ENCODE measurements at regions of chr7 and their contacts with region 1.

Region 1: DNA sequence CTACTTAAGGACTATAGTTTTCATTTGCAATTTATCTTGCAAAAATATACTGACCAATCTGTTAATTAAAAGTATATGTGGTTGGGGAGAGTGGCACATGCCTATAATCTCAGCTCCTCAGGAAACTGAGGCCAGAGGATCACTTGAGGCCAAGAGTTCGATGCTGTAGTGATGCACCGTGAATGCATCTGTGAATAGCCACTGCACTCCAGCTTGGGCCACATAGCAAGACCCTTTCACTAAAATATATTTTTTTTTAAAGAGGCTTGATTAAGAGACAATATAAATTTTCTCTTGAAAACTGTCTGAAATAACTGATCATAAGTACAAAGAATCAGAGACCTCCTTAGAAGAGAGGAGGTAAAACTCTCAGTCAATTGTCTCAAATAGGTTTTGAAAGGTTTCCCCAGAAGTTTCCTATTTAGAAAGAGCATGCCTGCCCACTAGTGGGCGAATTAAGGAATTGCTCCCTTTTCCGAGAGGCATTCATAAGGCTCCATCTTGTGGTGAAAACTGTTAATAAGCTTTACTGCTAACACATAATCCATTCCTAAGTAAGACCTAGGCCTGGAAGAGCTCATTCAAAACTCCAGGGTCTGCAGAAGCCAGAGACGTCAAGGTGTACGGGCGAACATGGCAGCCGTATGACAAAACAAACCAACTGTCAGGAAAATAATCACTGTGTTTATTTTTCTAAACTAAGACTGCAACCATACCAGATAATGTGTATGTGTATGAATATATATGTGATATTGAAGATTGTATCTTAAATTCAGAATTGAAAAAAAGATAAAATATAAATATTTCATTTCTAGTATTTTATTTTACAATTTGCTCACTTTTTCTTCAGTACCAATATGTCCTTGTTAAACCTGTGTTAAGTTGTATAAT is 6.8 kb upstream of the TAS2R40 start:
- DNase-seq: peak; percentile 67 to 79 (median 77)
- H3K4me3 ChIP-seq: no peak overlapping the region
- H3K4me3 Mint-ChIP-seq: no peak overlapping the region
- H3K27ac ChIP-seq: no peak overlapping the region
- H3K27ac Mint-ChIP-seq: no peak overlapping the region
- H3K4me1 ChIP-seq: no peaks in the 10 kb centered on the region
- H3K4me1 Mint-ChIP-seq: peaks cover 0 to 1% (median 0%) of the 10 kb centered on the region in 4 donors
- H3K27me3 ChIP-seq: no peaks in the 10 kb centered on the region
- H3K27me3 Mint-ChIP-seq: peaks cover 3% of the 10 kb centered on the region in 2 donors

Region 2: GRCh38 chr7:142301923-142302550 is 913.0 kb before region 1 on chr7:
- CTCF ChIA-PET with region 1: interaction called, 23 read pairs
- POLR2A ChIA-PET with region 1: no interaction called
- intact Hi-C with region 1: loop called (anchors 2 kb)
- DNase-seq: no peak
- H3K4me3 ChIP-seq: no peak overlapping the region
- H3K4me3 Mint-ChIP-seq: no peak overlapping the region
- H3K27ac ChIP-seq: no peak overlapping the region
- H3K27ac Mint-ChIP-seq: no peak overlapping the region
- H3K4me1 ChIP-seq: peaks cover 8% of the 10 kb centered on the region
- H3K4me1 Mint-ChIP-seq: peaks cover 14 to 28% (median 18%) of the 10 kb centered on the region in 4 donors
- H3K27me3 ChIP-seq: no peaks in the 10 kb centered on the region
- H3K27me3 Mint-ChIP-seq: peaks cover 15 to 18% of the 10 kb centered on the region in 2 donors

Region 3: GRCh38 chr7:142535123-142535779 is 679.8 kb before region 1 on chr7:
- CTCF ChIA-PET with region 1: interaction called, 5 read pairs
- POLR2A ChIA-PET with region 1: no interaction called
- intact Hi-C with region 1: loop called (anchors 1 kb)
- DNase-seq: peak; percentile 57 to 80 (median 64)
- H3K4me3 ChIP-seq: peak overlapping the region in 1 of 2 donors; percentile 38
- H3K4me3 Mint-ChIP-seq: peak overlapping the region; percentile 61 to 86 (median 76)
- H3K27ac ChIP-seq: peak overlapping the region; percentile 49
- H3K27ac Mint-ChIP-seq: peak overlapping the region; percentile 32 to 94 (median 87)
- H3K4me1 ChIP-seq: peaks cover 28% of the 10 kb centered on the region
- H3K4me1 Mint-ChIP-seq: peaks cover 17 to 40% (median 23%) of the 10 kb centered on the region in 4 donors
- H3K27me3 ChIP-seq: no peaks in the 10 kb centered on the region
- H3K27me3 Mint-ChIP-seq: peaks cover 0 to 2% of the 10 kb centered on the region in 2 donors

Region 4: DNA sequence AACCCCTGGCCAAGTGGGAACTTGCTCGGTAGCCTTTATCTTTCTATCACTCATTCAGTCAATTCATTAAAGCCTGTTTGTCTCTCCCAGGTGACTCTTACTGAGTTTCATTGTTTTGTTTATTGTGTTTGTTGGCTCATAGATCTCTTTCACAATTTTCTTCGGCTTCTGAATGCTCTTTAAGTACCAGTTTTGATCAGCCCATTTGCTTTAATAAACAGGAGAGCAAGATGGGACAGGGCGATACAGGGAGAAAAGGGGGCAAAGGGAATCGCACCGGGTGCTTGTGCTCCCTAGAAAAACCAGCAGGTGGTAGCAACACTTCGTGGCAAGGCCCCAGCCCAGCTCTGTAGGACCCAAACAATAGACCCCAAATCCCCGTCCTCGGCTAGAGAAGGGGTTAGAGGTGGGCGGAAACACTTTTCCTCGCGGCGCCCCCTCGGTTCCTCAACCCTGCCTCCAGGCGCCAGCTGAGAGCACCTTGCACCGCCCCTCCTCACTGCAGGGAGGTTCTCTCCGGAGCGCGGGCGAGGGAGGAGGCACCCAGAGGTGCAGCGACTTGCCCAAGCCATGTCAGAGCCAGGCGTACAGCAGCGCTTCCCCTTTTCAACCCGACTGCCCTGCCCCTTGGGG is 361.2 kb before region 1 on chr7:
- CTCF ChIA-PET with region 1: interaction called, 11 read pairs
- POLR2A ChIA-PET with region 1: no interaction called
- intact Hi-C with region 1: loop called (anchors 1 kb)
- DNase-seq: peak; percentile 63 to 72 (median 71)
- H3K4me3 ChIP-seq: peak overlapping the region; percentile 81 to 90
- H3K4me3 Mint-ChIP-seq: peak overlapping the region; percentile 93 to 98 (median 97)
- H3K27ac ChIP-seq: peak overlapping the region; percentile 27
- H3K27ac Mint-ChIP-seq: peak overlapping the region; percentile 86 to 96 (median 92)
- H3K4me1 ChIP-seq: peaks cover 24% of the 10 kb centered on the region
- H3K4me1 Mint-ChIP-seq: peaks cover 12 to 34% (median 19%) of the 10 kb centered on the region in 4 donors
- H3K27me3 ChIP-seq: no peaks in the 10 kb centered on the region
- H3K27me3 Mint-ChIP-seq: peaks cover 3% of the 10 kb centered on the region in 2 donors

Region 5: GRCh38 chr7:142992464-142992863 is 222.6 kb before region 1 on chr7:
- CTCF ChIA-PET with region 1: interaction called, 11 read pairs
- POLR2A ChIA-PET with region 1: no interaction called
- intact Hi-C with region 1: no loop called
- DNase-seq: no peak
- H3K4me3 ChIP-seq: no peak overlapping the region
- H3K4me3 Mint-ChIP-seq: peak overlapping the region in 2 of 8 donors; percentile 29 to 57
- H3K27ac ChIP-seq: no peak overlapping the region
- H3K27ac Mint-ChIP-seq: no peak overlapping the region
- H3K4me1 ChIP-seq: no peaks in the 10 kb centered on the region
- H3K4me1 Mint-ChIP-seq: no peaks in the 10 kb centered on the region
- H3K27me3 ChIP-seq: no peaks in the 10 kb centered on the region
- H3K27me3 Mint-ChIP-seq: peaks cover 8 to 18% of the 10 kb centered on the region in 2 donors

Region 6: GRCh38 chr7:143229054-143229790 is 14.2 kb after region 1 on chr7:
- CTCF ChIA-PET with region 1: interaction called, 12 read pairs
- POLR2A ChIA-PET with region 1: no interaction called
- intact Hi-C with region 1: no loop called
- DNase-seq: no peak
- H3K4me3 ChIP-seq: no peak overlapping the region
- H3K4me3 Mint-ChIP-seq: no peak overlapping the region
- H3K27ac ChIP-seq: no peak overlapping the region
- H3K27ac Mint-ChIP-seq: no peak overlapping the region
- H3K4me1 ChIP-seq: no peaks in the 10 kb centered on the region
- H3K4me1 Mint-ChIP-seq: no peaks in the 10 kb centered on the region
- H3K27me3 ChIP-seq: no peaks in the 10 kb centered on the region
- H3K27me3 Mint-ChIP-seq: no peaks in the 10 kb centered on the region

Region 7: DNA sequence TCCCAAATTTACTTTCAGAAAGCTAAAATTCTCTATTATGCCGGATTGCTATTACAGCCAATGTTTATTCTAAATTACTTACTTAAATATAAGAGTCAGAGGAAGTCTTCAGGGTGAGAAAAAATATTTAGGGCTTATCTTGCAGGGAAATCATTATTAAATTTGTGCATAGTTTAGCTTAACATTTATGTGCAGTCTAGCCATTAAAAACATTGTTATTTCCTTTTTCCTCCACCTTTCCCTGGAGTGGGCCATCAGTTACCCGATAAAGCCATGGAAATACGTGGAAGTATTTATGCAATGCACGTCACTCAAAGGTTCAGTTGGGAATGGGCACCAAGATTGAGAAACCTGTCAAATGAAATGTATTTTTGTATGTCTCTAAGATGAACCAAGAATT is 218.7 kb after region 1 on chr7:
- CTCF ChIA-PET with region 1: no interaction called
- POLR2A ChIA-PET with region 1: no interaction called
- intact Hi-C with region 1: no loop called
- DNase-seq: peak in 1 of 5 donors; percentile 35
- H3K4me3 ChIP-seq: no peak overlapping the region
- H3K4me3 Mint-ChIP-seq: no peak overlapping the region
- H3K27ac ChIP-seq: no peak overlapping the region
- H3K27ac Mint-ChIP-seq: no peak overlapping the region
- H3K4me1 ChIP-seq: peaks cover 9% of the 10 kb centered on the region
- H3K4me1 Mint-ChIP-seq: peaks cover 12 to 20% (median 13%) of the 10 kb centered on the region in 4 donors
- H3K27me3 ChIP-seq: no peaks in the 10 kb centered on the region
- H3K27me3 Mint-ChIP-seq: peaks cover 0 to 1% of the 10 kb centered on the region in 2 donors